H1 (cell line): ENCODE measurements at regions of chr5 and their contacts with region 1.

Region 1: DNA sequence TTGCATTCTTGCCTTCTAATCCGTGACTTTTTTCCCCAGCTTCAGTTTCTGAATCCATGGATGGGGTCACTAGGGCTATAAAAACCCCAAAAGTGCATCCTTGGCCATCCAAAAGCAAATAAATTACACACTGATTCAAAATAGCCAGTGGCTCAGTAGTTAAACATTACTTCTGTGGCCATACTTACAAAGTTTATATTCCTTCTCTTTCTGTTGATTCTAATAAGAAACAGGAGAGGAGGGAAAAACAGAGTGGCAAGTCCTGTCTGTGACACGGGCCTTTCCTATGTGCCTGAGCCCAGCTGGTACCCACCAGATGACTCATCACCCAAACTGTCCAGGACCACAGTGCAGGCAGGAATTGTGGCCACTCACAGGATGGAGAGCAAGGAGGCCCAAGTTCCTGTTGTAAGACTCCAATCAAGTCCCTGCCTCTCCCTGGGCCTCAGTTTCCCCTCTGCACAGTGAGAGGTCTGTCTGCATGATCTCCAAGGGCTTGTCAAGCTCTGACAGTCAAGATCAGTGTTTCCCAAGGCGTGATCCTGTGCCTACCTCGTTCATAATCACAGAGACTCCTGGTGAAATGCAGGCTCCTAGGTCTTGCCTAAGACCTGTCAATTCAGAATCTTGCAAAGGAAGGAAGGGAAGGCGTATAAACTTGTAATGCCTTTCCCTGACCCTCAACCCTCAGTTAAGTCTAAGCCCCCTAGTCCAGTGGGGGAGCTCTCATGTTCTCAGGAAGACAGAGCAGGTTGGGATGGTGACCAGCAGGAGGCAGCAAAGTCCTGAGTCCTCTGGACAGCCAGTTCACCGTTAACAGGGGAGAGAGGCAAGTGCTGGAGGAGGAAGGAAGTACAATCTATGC is 29.5 kb downstream of the TNIP1 start:
- DNase-seq: peak; percentile 63 to 88
- H3K4me3 ChIP-seq: no peak overlapping the region
- H3K27ac ChIP-seq: no peak overlapping the region
- H3K4me1 ChIP-seq: no peaks in the 10 kb centered on the region
- H3K27me3 ChIP-seq: no peaks in the 10 kb centered on the region
- CTCF ChIP-seq: peak; percentile 90 to 99 (median 98)
- EP300 ChIP-seq: no peak
- POLR2A ChIP-seq: no peak
- RAD21 ChIP-seq: peak; percentile 90 to 94

Region 2: DNA sequence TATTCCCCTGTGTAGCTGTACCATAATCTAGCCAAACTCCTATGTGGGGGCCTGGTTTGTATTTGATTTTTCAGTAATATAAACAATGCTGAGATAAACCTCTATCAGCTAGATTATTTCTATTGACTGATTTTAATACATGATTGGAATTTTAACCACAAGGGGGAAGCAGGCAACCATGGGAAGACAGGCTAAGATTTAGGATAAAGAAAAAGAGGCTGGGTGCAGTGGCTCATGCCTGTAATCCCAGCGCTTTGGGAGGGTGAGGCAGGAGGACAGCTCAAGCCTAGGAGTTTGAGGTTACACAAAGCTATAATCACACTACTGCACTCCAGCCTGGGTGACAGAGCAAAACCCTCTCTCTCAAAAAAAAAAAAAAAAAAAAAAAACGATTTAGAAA is 49.0 kb before region 1 on chr5:
- CTCF ChIA-PET with region 1: interaction called, 128 read pairs
- POLR2A ChIA-PET with region 1: interaction called, 3 read pairs
- DNase-seq: peak in 1 of 2 experiments; percentile 42
- H3K4me3 ChIP-seq: no peak overlapping the region
- H3K27ac ChIP-seq: no peak overlapping the region
- H3K4me1 ChIP-seq: peaks cover 0 to 3% (median 0%) of the 10 kb centered on the region in 4 experiments; a peak in 1 of 7 replicates
- H3K27me3 ChIP-seq: no peaks in the 10 kb centered on the region
- CTCF ChIP-seq: peak in 2 of 3 experiments; percentile 37 to 57; a peak in 2 of 4 replicates
- EP300 ChIP-seq: no peak
- POLR2A ChIP-seq: no peak
- RAD21 ChIP-seq: peak; percentile 73 to 78

Region 3: GRCh38 chr5:151037561-151038411 is 13.5 kb before region 1 on chr5:
- CTCF ChIA-PET with region 1: interaction called, 157 read pairs
- POLR2A ChIA-PET with region 1: no interaction called
- DNase-seq: no peak
- H3K4me3 ChIP-seq: no peak overlapping the region
- H3K27ac ChIP-seq: no peak overlapping the region
- H3K4me1 ChIP-seq: no peaks in the 10 kb centered on the region
- H3K27me3 ChIP-seq: no peaks in the 10 kb centered on the region
- CTCF ChIP-seq: no peak
- EP300 ChIP-seq: no peak
- POLR2A ChIP-seq: no peak
- RAD21 ChIP-seq: no peak

Region 4: DNA sequence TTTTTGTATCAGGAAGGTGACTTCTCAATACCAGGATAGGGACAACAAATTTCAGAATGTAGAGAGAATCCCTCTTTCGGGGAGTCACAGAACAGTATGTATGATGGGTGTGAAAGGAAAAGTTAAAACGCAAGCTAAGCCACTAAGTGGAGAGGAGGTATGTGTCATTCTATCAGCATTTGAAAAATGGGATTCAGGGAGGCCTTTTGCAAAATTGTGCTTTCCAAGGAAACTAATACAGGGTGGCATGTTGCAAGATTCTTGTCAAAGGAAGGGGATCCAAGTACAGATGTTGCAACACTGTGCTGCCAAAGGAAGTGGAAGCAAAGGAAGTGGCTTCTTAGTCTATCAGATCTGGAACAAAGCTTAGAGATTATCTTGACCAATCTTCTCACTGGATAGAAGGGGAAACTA is 42.2 kb after region 1 on chr5:
- CTCF ChIA-PET with region 1: interaction called, 42 read pairs
- POLR2A ChIA-PET with region 1: interaction called, 3 read pairs
- DNase-seq: no peak
- H3K4me3 ChIP-seq: no peak overlapping the region
- H3K27ac ChIP-seq: no peak overlapping the region
- H3K4me1 ChIP-seq: peaks cover 1 to 20% (median 11%) of the 10 kb centered on the region in 4 experiments; a peak in 4 of 7 replicates
- H3K27me3 ChIP-seq: no peaks in the 10 kb centered on the region; a peak in 2 of 7 replicates
- CTCF ChIP-seq: no peak
- EP300 ChIP-seq: no peak
- POLR2A ChIP-seq: no peak
- RAD21 ChIP-seq: no peak

Region 5: GRCh38 chr5:151126199-151126645 is 74.9 kb after region 1 on chr5:
- CTCF ChIA-PET with region 1: interaction called, 777 read pairs
- POLR2A ChIA-PET with region 1: no interaction called
- DNase-seq: peak; percentile 29 to 85
- H3K4me3 ChIP-seq: no peak overlapping the region
- H3K27ac ChIP-seq: no peak overlapping the region
- H3K4me1 ChIP-seq: peaks cover 0 to 3% (median 0%) of the 10 kb centered on the region in 4 experiments; a peak in 3 of 7 replicates
- H3K27me3 ChIP-seq: no peaks in the 10 kb centered on the region
- CTCF ChIP-seq: peak; percentile 85 to 94 (median 87)
- EP300 ChIP-seq: no peak
- POLR2A ChIP-seq: no peak
- RAD21 ChIP-seq: peak; percentile 85 to 90

Region 6: DNA sequence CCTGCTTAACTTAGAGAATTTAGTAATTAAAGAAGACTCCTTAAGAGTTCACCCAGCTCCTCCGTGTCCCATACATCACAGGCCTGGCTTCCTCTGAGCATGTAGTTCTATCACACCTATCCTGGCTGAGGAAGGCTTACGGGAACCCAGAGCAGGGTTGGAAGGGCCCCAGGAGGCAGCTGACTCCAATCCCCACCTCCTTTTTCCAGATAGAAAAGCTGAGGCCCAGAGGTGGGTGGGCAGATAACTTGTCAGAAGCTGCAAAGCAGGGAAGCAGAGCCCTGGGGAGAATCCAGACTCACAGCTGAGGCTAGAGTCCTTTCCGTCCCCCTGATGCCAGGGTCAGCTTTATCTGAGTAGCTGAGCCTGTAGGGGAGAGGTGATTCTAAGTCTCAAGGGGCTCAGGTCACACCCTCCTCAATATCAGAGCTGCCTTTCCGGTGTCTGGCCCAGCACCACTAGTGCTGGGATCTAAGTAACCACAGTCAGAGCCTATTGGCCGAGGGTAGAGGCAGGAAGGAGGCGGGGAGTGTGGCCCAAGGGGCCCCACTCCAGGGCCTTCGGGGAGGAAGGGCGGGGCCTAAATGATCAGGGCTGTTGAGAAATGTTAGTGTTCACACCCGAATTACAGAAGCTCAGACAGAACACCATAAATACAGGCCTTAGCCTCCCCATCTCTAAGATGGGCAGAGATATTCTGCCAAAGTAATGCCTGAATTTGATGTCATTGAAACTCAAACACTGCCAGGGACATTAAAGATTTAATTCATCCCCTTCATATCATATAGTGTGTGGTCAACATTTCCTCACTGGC is 162.7 kb after region 1 on chr5:
- CTCF ChIA-PET with region 1: interaction called, 10 read pairs
- POLR2A ChIA-PET with region 1: no interaction called
- DNase-seq: peak in 1 of 2 experiments; percentile 58
- H3K4me3 ChIP-seq: no peak overlapping the region
- H3K27ac ChIP-seq: no peak overlapping the region
- H3K4me1 ChIP-seq: peaks cover 0 to 3% (median under 1%) of the 10 kb centered on the region in 4 experiments; a peak in 4 of 7 replicates
- H3K27me3 ChIP-seq: no peaks in the 10 kb centered on the region
- CTCF ChIP-seq: no peak
- EP300 ChIP-seq: no peak
- POLR2A ChIP-seq: peak in 1 of 2 experiments; percentile 38; a peak in 1 of 3 replicates
- RAD21 ChIP-seq: no peak